Dorsolateral prefrontal cortex (tissue), 120 donors: ENCODE measurements at regions of chr10 and their contacts with region 1.

Region 1: DNA sequence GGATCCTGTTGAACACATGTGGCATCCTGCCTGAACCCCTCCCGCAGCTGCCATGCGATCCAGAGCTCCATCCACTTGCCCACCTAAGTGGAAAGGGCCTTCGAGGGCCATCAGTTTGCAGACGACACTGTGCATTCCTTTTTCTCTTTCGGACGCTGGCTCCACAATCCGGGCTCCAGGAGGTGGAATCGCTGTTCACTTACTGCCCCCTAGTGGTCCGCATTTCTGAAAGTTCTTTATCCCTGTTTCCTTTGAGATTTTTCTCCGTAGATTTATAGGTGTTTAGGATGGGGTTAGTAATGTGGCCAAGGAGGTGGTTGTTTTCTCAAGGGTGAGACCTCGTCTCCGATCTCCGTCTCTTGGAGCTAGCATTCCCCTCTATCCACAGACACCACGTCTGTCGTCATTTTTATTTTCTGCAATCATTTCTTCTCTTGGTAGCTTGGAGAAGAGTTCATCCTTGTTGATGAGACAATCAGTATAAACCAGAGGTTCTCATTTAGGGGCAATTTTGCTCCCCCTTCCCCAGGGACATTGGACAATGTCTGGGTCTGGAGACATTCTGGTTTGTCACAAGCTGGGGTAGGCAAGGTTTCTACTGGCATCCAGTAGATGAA is 204.6 kb downstream of the ARHGAP21 start:
- DNase-seq: peak in 8 of 10 donors; percentile 45 to 74 (median 69)
- H3K4me3 ChIP-seq: peak overlapping the region in 14 of 59 donors; percentile 2 to 47 (median 12)
- H3K27ac ChIP-seq: peak overlapping the region in 21 of 59 donors; percentile 1 to 67 (median 27)
- H3K27me3 ChIP-seq: no peaks in the 10 kb centered on the region
- CTCF ChIP-seq: peak; percentile 73 to 94 (median 84)

Region 2: DNA sequence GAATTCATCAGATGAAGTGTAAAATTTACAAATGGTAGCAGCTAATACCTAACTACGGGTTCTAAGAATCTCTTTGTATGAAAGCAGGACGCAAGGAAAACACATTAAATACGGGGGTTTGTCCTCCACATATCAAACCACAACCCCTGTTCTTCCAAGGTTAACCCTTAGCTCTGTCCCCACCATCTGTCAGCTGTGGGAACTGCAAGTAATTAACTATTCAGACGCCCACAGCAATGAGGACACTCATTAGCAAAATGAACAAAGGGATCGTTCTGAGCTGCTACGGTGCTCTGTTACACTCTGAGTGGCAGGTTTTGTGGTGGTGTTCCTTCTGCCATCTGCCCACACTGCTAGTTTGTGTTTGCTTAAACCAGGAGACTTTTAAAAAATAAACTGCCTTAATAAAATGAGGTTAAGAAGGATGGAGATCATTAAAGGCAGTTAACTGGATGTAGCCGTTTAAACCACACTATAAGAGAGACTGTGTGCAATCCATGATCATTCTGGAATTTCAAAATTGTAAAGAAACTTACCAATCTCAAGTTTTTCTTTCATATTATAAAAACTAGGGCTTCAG is 1225.9 kb before region 1 on chr10:
- intact Hi-C with region 1: loop called in 1 of 2 experiments (anchors 10 kb)
- DNase-seq: peak in 2 of 10 donors; percentile 40 to 53
- H3K4me3 ChIP-seq: peak overlapping the region in 5 of 59 donors; percentile 0 to 28 (median 1)
- H3K27ac ChIP-seq: peak overlapping the region in 1 of 59 donors; percentile 27
- H3K27me3 ChIP-seq: no peaks in the 10 kb centered on the region
- CTCF ChIP-seq: peak in 53 of 56 donors; percentile 20 to 78 (median 59)

Region 3: DNA sequence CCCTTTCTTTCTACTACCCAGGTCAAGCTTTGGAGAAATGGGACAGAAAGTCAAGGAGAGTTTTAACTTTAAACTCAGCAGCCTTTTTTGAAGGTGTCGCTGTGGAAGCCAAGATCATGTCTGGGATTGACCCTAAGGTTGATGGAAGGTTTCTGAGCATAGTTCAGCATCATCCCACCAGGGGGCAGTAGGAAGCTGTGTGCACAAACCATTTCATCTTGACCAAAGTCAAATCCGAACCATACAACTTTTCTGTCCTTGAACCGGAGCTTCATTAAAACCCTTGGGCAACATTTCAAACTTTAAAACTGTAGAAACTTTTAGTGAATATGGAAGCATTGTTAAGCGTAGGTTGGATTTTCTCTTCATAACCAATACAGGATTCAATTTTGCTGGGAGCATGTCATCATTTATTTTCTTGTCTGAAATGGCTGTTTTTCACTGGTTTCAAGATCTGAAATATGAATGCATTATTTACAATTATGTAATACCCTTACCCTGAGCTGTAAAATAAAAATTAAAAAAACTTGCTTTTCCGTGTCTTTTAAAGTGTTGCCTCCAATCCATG is 524.5 kb before region 1 on chr10:
- intact Hi-C with region 1: loop called (anchors 2 to 10 kb)
- DNase-seq: peak in 5 of 10 donors; percentile 20 to 67 (median 49)
- H3K4me3 ChIP-seq: peak overlapping the region in 1 of 59 donors; percentile 9
- H3K27ac ChIP-seq: no peak overlapping the region
- H3K27me3 ChIP-seq: no peaks in the 10 kb centered on the region
- CTCF ChIP-seq: peak; percentile 45 to 90 (median 81)

Region 4: GRCh38 chr10:24197263-24197662 is 321.8 kb before region 1 on chr10:
- intact Hi-C with region 1: loop called (anchors 5 to 10 kb)
- DNase-seq: no peak
- H3K4me3 ChIP-seq: no peak overlapping the region
- H3K27ac ChIP-seq: no peak overlapping the region
- H3K27me3 ChIP-seq: peaks cover 0 to 4% (median 0%) of the 10 kb centered on the region in 45 donors
- CTCF ChIP-seq: no peak